Activated CD4-positive, alpha-beta memory T cell treated with anti-CD3 and anti-CD28 coated beads, Interleukin-2, amount 10 ng/mL, durations not matched to agents 7 days and 5 days (primary cell): ENCODE measurements at regions of chr17 and their contacts with region 1.

Region 1: GRCh38 chr17:4017377-4017776 is 53.1 kb upstream of the ATP2A3 start:
- DNase-seq: no peak
- H3K4me3 Mint-ChIP-seq: no peak overlapping the region
- H3K27ac Mint-ChIP-seq: no peak overlapping the region
- H3K4me1 Mint-ChIP-seq: no peaks in the 10 kb centered on the region
- H3K27me3 Mint-ChIP-seq: no peaks in the 10 kb centered on the region

Region 2: DNA sequence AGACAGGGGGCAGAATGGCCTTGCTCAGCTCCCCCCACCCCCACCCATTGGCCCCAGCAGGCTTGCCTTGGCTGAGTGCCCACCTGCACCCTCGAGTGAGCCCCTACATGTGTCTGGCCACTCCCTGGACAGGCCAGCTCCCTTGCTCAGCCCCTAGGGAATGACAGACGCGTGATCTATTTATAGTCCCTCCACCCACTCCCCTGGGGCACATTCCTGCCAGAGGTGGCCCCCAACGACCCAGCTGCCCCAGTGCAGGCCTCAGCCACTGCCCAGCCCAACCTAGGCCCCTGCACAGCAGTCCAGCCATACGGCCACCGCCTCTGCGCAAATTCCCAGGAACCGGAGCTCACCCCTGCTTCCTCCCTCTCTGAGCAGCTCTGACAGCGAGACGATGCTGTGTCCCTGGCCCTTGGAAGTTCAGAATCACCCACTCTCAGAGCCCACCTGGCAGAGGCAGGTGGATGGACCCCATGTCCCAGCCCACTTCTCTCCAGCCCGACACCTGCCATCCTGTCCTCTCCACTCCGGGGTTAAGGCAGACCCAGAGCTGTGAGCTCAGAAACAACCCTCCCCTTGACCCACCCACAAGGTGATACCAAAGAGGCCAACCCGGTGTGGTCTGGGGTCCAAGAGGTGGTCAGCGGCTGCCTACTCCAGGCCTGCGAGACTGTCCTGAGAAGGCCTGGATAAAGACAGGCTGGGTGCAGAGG is 89.6 kb before region 1 on chr17:
- CTCF ChIA-PET with region 1: no interaction called
- POLR2A ChIA-PET with region 1: no interaction called
- DNase-seq: no peak
- H3K4me3 Mint-ChIP-seq: no peak overlapping the region
- H3K27ac Mint-ChIP-seq: no peak overlapping the region
- H3K4me1 Mint-ChIP-seq: no peaks in the 10 kb centered on the region
- H3K27me3 Mint-ChIP-seq: no peaks in the 10 kb centered on the region

Region 3: DNA sequence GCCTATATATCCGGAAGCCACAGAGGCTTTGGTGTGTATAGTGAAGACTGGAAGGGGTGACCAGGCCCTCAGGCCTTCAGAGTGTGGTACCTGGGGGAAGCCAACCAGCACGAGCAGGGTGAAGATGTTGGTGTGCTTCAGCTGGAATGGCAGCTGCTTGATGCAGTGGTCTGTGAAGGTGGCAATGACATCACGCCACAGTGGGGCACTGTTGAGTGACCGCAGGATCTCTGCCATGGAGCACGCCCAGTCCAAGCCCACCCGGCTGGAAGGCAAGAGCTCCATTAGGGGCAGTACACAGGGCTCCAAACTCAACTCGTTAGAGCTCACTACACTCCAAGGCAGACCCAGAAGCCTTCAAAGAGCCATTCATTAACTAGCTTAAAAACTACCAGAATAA is 15.4 kb after region 1 on chr17:
- CTCF ChIA-PET with region 1: interaction called, 12 read pairs
- POLR2A ChIA-PET with region 1: no interaction called
- DNase-seq: no peak
- H3K4me3 Mint-ChIP-seq: no peak overlapping the region
- H3K27ac Mint-ChIP-seq: no peak overlapping the region
- H3K4me1 Mint-ChIP-seq: peaks cover 5% of the 10 kb centered on the region
- H3K27me3 Mint-ChIP-seq: no peaks in the 10 kb centered on the region